ENCODE measurements at regions of chr2 and their contacts with region 1.

Region 1: DNA sequence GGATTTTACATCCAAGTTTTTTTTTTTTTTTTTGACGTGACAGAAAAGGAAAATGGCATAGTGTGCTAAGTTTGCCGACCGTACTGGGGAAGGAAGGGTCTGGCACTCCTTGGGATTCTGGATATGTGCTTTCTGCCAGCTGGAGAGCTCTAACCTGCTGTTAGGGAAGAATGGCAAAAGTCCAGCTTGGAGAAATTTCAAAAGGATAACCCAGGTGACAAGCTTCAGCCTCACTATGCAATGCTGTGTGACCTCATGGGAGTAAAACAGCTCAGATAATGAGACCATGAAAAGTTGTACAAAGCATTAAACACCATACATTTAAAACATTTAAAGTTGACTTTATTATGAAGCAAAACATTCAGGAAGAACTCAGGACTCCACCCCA is 10.3 kb upstream of the GPR45 start:
- DNase-seq: no peak
- H3K4me3 ChIP-seq: no peak overlapping the region
- CTCF ChIP-seq: no peak

Region 2: DNA sequence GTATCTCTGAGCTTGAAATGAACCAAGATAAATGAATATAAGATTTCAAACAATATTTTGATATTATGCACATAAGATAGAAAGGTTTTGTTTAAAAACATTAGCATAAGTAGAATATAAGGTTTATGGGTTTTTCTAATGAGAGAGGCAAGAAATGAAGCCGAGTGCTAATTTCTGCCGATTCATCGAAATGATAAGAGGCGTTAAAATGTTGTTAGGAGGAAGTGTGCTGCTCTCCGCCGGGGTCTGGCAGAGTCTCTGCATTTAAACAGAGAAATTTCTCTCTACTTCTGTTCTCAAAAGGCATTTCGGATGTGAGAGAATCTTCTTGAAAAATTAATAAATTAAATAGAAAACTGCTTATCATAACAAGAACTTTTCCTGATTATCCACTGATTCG is 109.8 kb before region 1 on chr2:
- in situ Hi-C with region 1: loop called (anchors 5 kb)
- DNase-seq: no peak
- H3K4me3 ChIP-seq: no peak overlapping the region
- CTCF ChIP-seq: no peak

Measured in astrocyte of the cerebellum (primary cell).